Activated CD4-positive, alpha-beta T cell treated with anti-CD3 and anti-CD28 coated beads, Interleukin-2, amount 10 ng/mL, durations not matched to agents 7 days and 5 days (primary cell): ENCODE measurements at regions of chr1 and their contacts with region 1.

Region 1: DNA sequence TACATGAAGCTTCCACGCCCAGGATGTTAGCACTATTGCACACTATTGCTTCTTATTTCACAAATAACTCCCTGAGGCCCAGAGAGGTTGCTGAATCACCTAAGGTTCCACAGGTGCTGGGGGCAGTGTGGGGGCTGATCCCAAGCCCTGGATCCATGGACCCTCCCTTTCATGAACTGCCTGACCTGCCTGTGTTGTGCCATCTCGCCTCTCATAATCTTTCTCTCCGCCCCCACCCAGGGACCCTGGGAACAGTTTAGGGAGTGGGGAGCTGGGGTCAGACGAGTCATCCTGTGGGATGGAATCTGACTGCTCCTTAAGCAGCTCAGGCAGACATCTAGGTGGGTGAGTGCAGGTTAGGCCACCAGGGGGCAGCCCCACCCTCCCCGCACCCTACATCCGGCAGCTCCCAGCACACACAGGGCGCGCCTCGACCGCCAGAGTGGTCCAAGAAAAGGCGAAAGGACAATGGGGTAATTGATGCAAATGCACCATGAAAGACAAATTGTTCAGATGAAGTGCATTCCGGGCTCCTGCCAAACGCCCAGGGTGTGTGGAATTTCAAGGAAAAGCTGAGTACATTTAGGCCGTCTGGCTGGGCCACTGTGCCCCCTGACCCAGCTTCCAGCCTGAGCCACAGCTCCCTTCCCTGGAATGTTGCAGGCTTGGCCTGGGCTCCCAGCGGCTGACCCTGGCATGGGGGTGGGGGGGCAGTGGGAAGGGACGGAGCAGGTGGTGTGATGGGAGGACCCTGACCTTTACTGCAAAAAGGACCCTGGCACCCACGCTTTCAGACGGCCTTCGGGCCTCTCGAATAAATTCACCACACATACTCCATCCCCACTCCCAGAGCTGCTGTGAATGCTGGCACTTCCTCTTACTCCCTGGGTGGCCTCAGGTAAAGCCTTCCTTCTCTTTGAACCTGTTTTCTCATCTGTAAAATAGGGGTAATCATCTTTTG is 20.8 kb downstream of the PHLDA3 start:
- DNase-seq: peak; percentile 72
- H3K4me3 Mint-ChIP-seq: no peak overlapping the region
- H3K27ac Mint-ChIP-seq: no peak overlapping the region
- H3K4me1 Mint-ChIP-seq: peaks cover 32% of the 10 kb centered on the region
- H3K27me3 Mint-ChIP-seq: peaks cover 19% of the 10 kb centered on the region

Region 2: DNA sequence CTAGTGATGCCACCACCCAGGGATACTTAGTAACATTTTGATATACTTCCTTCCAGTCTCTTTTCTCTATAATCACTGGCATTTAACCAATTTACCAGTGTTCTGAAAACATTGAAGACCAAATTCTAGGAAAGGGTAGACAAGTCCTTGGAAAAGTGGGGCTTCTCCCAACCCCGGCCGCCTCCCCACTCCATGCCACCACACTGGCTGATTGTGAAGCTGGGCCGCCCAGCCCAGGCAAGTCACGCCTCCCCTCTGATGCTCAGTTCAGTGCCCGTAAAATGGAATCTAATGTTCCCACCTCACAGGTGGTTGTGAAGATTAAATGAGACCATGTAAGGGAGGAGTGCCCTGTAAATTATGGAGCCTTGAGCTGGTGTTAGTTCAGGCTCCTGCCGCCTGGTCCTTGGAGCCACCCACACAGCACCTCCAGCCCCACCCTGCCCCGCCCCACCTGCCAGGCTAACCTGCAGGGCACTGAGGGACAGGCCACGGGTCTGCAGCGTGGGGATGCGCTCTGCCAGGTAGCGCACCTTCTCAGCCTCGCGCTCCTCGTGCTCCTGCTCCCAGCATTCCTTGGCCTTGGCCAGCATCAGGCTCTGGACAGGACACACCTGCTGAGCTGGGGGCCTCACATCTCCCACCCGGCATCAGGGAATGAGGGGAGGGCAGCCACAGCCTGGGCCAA is 34.0 kb before region 1 on chr1:
- CTCF ChIA-PET with region 1: no interaction called
- POLR2A ChIA-PET with region 1: no interaction called
- DNase-seq: no peak
- H3K4me3 Mint-ChIP-seq: no peak overlapping the region
- H3K27ac Mint-ChIP-seq: no peak overlapping the region
- H3K4me1 Mint-ChIP-seq: no peaks in the 10 kb centered on the region
- H3K27me3 Mint-ChIP-seq: peaks cover 2% of the 10 kb centered on the region

Region 3: GRCh38 chr1:201436393-201436792 is 11.8 kb before region 1 on chr1:
- CTCF ChIA-PET with region 1: interaction called, 12 read pairs
- POLR2A ChIA-PET with region 1: no interaction called
- DNase-seq: no peak
- H3K4me3 Mint-ChIP-seq: no peak overlapping the region
- H3K27ac Mint-ChIP-seq: no peak overlapping the region
- H3K4me1 Mint-ChIP-seq: peaks cover 7% of the 10 kb centered on the region
- H3K27me3 Mint-ChIP-seq: peaks cover 30% of the 10 kb centered on the region